GM12878 (cell line): ENCODE measurements at regions of chr11 and their contacts with region 1.

Region 1: GRCh38 chr11:94183886-94184264 is 55.2 kb downstream of the PANX1 start:
- DNase-seq: peak; percentile 17
- ATAC-seq: peak; percentile 91
- H3K4me3 ChIP-seq: no peak overlapping the region
- H3K27ac ChIP-seq: no peak overlapping the region
- H3K4me1 ChIP-seq: peaks cover 9% of the 10 kb centered on the region
- H3K27me3 ChIP-seq: no peaks in the 10 kb centered on the region
- CTCF ChIP-seq: peak; percentile 77 to 90 (median 86)
- EP300 ChIP-seq: no peak
- POLR2A ChIP-seq: no peak
- RAD21 ChIP-seq: peak; percentile 87

Region 2: DNA sequence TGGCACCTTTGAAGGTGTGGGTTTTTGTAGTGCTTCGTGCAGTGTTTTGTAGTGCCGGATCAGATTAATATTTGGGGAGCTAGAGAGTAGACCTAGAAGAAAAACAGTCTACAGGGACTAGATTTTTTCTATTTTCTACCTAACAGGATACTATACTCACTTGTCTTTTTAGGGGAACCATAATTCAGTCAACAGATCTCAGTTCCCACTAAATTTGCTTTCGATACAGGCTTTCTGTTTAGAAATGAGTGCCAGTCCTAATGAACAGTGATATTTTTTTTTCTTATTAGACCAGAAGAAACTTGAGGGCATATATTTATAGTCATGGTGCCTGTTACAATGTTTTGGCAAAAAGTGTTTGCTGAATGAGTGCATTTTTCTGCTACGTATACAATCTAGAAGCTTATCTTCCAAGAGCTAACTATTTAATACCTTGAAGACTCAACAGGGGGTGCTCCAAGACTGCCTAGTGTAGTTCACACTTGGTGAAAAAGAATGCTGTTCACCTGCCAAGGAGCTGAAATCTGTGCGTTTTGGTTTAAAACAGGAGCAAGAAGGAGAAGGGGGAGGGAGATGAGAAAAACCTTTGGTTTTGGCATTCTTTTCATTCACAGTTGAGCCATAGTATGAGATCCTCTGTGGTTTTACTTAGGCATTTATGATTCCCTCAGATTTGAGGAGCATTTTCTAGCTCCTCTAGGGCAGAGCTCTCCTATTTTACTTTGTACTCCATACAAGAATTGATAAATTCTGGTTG is 288.6 kb before region 1 on chr11:
- CTCF ChIA-PET with region 1: interaction called, 9 read pairs
- POLR2A ChIA-PET with region 1: no interaction called
- RAD21 ChIA-PET with region 1: interaction called, 12 read pairs
- SMC1A ChIA-PET with region 1: interaction called, 9 read pairs
- in situ Hi-C with region 1: no loop called
- intact Hi-C with region 1: no loop called
- DNase-seq: no peak
- ATAC-seq: peak; percentile 82
- H3K4me3 ChIP-seq: no peak overlapping the region
- H3K27ac ChIP-seq: no peak overlapping the region
- H3K4me1 ChIP-seq: no peaks in the 10 kb centered on the region
- H3K27me3 ChIP-seq: no peaks in the 10 kb centered on the region
- CTCF ChIP-seq: peak; percentile 51 to 58 (median 56)
- EP300 ChIP-seq: no peak
- POLR2A ChIP-seq: no peak
- RAD21 ChIP-seq: peak; percentile 76

Region 3: GRCh38 chr11:94171693-94172440 is 12.0 kb before region 1 on chr11:
- CTCF ChIA-PET with region 1: interaction called, 90 read pairs
- POLR2A ChIA-PET with region 1: no interaction called
- RAD21 ChIA-PET with region 1: interaction called, 5 read pairs
- SMC1A ChIA-PET with region 1: interaction called, 25 read pairs
- in situ Hi-C with region 1: no loop called
- intact Hi-C with region 1: no loop called
- DNase-seq: no peak
- ATAC-seq: peak; percentile 91
- H3K4me3 ChIP-seq: no peak overlapping the region
- H3K27ac ChIP-seq: no peak overlapping the region
- H3K4me1 ChIP-seq: no peaks in the 10 kb centered on the region
- H3K27me3 ChIP-seq: no peaks in the 10 kb centered on the region
- CTCF ChIP-seq: peak; percentile 62 to 84 (median 79)
- EP300 ChIP-seq: no peak
- POLR2A ChIP-seq: no peak
- RAD21 ChIP-seq: peak; percentile 75

Region 4: GRCh38 chr11:94271885-94272372 is 88.1 kb after region 1 on chr11:
- CTCF ChIA-PET with region 1: interaction called, 3 read pairs
- POLR2A ChIA-PET with region 1: no interaction called
- RAD21 ChIA-PET with region 1: no interaction called
- SMC1A ChIA-PET with region 1: interaction called, 4 read pairs
- in situ Hi-C with region 1: no loop called
- intact Hi-C with region 1: loop called (anchors 5 kb)
- DNase-seq: peak; percentile 24
- ATAC-seq: peak; percentile 90
- H3K4me3 ChIP-seq: no peak overlapping the region
- H3K27ac ChIP-seq: peak overlapping the region; percentile 55; the same call in 1 of the 2 replicates
- H3K4me1 ChIP-seq: peaks cover 6% of the 10 kb centered on the region; the same call in 1 of the 2 replicates
- H3K27me3 ChIP-seq: no peaks in the 10 kb centered on the region
- CTCF ChIP-seq: no peak
- EP300 ChIP-seq: peak; percentile 88 to 91; a peak in 3 of 4 replicates
- POLR2A ChIP-seq: no peak
- RAD21 ChIP-seq: peak; percentile 33; the same call in 1 of the 2 replicates

Region 5: GRCh38 chr11:94417386-94417987 is 233.6 kb after region 1 on chr11:
- CTCF ChIA-PET with region 1: interaction called, 12 read pairs
- POLR2A ChIA-PET with region 1: no interaction called
- RAD21 ChIA-PET with region 1: interaction called, 4 read pairs
- SMC1A ChIA-PET with region 1: interaction called, 12 read pairs
- in situ Hi-C with region 1: loop called (anchors 10 kb)
- intact Hi-C with region 1: loop called (anchors 5 kb)
- DNase-seq: no peak
- ATAC-seq: peak; percentile 54
- H3K4me3 ChIP-seq: no peak overlapping the region
- H3K27ac ChIP-seq: no peak overlapping the region
- H3K4me1 ChIP-seq: no peaks in the 10 kb centered on the region
- H3K27me3 ChIP-seq: no peaks in the 10 kb centered on the region
- CTCF ChIP-seq: peak in 2 of 3 experiments; percentile 24 to 25; a peak in 3 of 6 replicates
- EP300 ChIP-seq: no peak
- POLR2A ChIP-seq: no peak
- RAD21 ChIP-seq: peak; percentile 74